Mammary epithelial cell (primary cell): ENCODE measurements at regions of chr1 and their contacts with region 1.

Region 1: GRCh38 chr1:53196485-53197270 is at the start of gene CPT2:
- DNase-seq: peak; percentile 86
- H3K4me3 ChIP-seq: peak within 1 kb of the TSS; percentile 67 to 94 (median 92)
- H3K27ac ChIP-seq: peak within 1 kb of the TSS; percentile 83
- H3K4me1 ChIP-seq: peaks cover 29% of the 10 kb centered on the region
- H3K27me3 ChIP-seq: no peaks in the 10 kb centered on the region
- CTCF ChIP-seq: no peak
- total RNA-seq, gene CPT2: 21.2 to 28.0 TPM

Region 2: GRCh38 chr1:52904927-52905698 is 291.6 kb before region 1 on chr1:
- CTCF ChIA-PET with region 1: no interaction called
- dilution Hi-C with region 1: no loop called
- in situ Hi-C with region 1: loop called in 1 of 2 experiments (anchors 25 kb)
- intact Hi-C with region 1: no loop called
- DNase-seq: no peak
- H3K4me3 ChIP-seq: no peak overlapping the region
- H3K27ac ChIP-seq: no peak overlapping the region
- H3K4me1 ChIP-seq: no peaks in the 10 kb centered on the region
- H3K27me3 ChIP-seq: no peaks in the 10 kb centered on the region
- CTCF ChIP-seq: peak; percentile 25 to 48

Region 3: DNA sequence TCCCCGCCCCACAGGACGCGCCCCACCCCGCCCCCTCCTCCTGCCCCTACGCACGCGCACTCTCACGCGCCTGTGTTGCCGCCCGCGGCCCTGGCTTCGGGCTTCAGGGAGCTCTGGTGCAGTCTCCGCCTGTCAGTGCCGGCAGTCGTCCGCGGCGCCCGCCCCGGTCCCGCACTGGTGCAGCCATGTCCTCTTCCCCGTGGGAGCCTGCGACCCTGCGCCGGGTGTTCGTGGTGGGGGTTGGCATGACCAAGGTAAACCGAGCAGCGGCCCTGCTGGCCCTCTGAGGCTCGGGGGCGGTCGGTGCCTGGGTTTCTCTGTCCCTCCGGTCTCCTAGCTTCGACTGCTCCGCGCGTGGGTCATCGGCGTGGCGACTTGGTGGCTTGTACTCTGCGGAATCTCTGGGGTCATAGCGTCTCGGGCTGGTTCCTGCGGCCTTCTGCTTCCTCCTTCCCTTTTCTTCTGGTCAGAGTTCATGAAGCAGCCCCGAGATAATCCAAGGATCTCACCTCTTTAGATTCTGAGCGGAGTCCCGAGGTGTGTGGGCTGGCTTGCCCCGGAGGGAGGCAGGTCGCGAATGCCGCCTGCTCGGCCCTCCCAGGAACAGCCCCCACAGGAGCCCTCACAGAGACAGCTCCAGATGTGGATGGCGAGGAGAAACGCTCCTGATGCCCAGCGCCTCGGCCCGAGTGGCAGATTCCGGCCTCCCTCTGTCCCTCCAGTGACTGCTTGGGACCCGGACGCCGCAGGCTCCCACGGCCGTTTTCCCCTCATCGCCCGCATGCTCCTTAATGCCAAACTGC is 269.3 kb before region 1 on chr1 and contains the start of gene SCP2:
- CTCF ChIA-PET with region 1: no interaction called
- dilution Hi-C with region 1: no loop called
- in situ Hi-C with region 1: loop called (anchors 25 kb)
- intact Hi-C with region 1: no loop called
- DNase-seq: peak; percentile 65
- H3K4me3 ChIP-seq: peak within 1 kb of the TSS; percentile 82 to 87 (median 85)
- H3K27ac ChIP-seq: peak within 1 kb of the TSS; percentile 47
- H3K4me1 ChIP-seq: peaks cover 3% of the 10 kb centered on the region
- H3K27me3 ChIP-seq: no peaks in the 10 kb centered on the region
- CTCF ChIP-seq: no peak
- total RNA-seq, gene SCP2: 80.0 to 105 TPM

Region 4: DNA sequence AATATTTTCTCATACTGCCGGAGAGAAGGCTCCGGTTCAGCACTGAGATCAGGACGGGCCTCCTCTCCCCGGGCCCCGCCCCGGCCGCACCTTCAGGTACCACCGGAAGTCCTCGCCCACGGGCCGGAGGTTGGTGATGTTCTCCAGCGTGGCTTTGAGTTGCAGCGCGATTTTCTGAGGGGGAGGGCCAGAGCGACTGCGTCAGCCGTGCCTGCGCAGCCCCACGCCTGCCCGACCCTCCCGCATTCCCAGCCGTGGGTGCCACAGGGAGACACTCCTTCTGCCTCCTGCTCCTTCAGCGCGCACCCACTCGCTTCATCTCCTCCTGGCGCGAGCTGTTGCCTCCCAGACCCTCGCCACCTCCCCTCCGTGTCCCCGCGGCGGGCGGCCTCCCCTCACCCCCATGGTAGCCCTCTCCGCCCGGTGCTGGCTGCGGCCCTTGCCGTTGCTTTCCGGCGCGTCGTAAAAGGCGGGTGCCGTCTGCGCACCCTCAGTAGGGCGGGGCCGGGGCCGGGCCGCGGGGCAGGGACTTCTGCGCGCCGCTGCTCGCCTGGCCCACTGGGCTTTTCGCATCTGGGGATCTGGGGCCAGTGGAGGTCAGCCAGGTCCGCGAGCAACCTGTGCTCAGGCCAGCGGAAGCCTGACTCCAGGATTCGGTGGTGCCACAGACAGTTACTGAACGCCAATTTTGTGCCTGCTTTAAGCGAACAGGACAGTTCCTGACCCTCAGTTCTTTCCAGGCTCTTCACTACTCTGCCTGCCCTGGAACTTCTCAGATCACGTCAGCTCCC is 23.7 kb after region 1 on chr1 and contains the start of gene CZIB:
- CTCF ChIA-PET with region 1: no interaction called
- dilution Hi-C with region 1: no loop called
- in situ Hi-C with region 1: no loop called
- intact Hi-C with region 1: loop called (anchors 1 kb)
- DNase-seq: peak; percentile 94
- H3K4me3 ChIP-seq: peak within 1 kb of the TSS; percentile 79 to 99 (median 96)
- H3K27ac ChIP-seq: peak within 1 kb of the TSS; percentile 77
- H3K4me1 ChIP-seq: peaks cover 12% of the 10 kb centered on the region
- H3K27me3 ChIP-seq: no peaks in the 10 kb centered on the region
- CTCF ChIP-seq: no peak
- total RNA-seq, gene CZIB: 24.8 to 30.2 TPM

Region 5: DNA sequence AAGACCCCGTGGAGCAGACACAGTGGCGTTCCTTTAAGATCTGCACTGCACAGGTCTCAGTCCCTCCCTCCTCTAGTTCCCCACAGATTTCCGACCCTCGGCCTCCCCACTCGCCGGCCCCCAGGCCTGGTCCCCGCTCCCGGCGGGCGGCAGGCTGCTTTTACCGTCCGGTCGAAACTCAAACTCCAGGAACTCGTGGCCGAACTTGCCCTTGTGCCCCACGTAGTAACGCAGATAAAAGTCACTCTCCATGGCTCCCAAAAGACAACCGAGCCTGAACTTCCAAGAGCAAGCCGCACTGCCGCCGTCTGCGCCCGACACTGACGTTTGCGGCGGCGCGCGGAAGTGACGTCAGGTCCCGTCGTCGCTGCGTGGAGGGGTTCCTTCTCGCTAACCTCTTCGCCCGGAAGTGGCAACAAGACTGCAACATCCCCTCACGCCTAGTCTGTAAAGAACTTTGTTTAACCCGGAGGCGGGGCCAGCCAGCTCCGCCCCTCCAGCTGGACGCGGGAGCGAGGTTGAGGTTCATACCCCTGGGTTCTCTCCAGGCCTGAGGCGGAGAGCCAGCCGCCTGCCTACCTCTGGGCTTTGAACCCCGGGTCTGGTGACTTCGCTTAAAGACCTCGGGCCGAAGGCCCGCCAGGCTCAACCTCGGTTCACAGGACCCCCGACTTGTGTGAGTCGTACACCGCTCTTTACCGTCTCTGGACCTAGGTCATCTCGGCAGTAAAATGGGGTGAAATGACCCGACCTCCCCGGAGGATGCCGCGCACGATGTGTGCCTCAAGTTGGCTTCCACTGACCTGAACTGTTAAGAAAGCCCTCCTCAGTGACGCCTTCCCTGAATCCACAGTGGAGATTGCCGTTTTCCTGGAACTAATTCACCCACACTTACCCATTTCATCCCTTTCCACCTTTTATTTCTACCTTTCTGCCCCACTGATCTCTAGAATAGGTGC is 41.8 kb after region 1 on chr1 and contains the start of gene MAGOH:
- CTCF ChIA-PET with region 1: no interaction called
- dilution Hi-C with region 1: no loop called
- in situ Hi-C with region 1: no loop called
- intact Hi-C with region 1: no loop called
- DNase-seq: peak; percentile 91
- H3K4me3 ChIP-seq: peak within 1 kb of the TSS; percentile 85 to 94 (median 89)
- H3K27ac ChIP-seq: peak within 1 kb of the TSS; percentile 84
- H3K4me1 ChIP-seq: peaks cover 12% of the 10 kb centered on the region
- H3K27me3 ChIP-seq: no peaks in the 10 kb centered on the region
- CTCF ChIP-seq: no peak
- total RNA-seq, gene MAGOH: 15.8 to 43.8 TPM